Endothelial cell of umbilical vein (primary cell): ENCODE measurements at regions of chr18 and their contacts with region 1.

Region 1: GRCh38 chr18:1002653-1003178 is 98.0 kb downstream of the ADCYAP1 start:
- DNase-seq: peak; percentile 92
- H3K4me3 ChIP-seq: no peak overlapping the region
- H3K27ac ChIP-seq: peak overlapping the region; percentile 80
- H3K4me1 ChIP-seq: peaks cover 16% of the 10 kb centered on the region
- H3K27me3 ChIP-seq: no peaks in the 10 kb centered on the region
- CTCF ChIP-seq: no peak
- POLR2A ChIP-seq: no peak

Region 2: GRCh38 chr18:987325-988186 is 15.2 kb before region 1 on chr18:
- CTCF ChIA-PET with region 1: interaction called, 7 read pairs
- POLR2A ChIA-PET with region 1: no interaction called
- dilution Hi-C with region 1: no loop called
- intact Hi-C with region 1: loop called (anchors 1 kb)
- DNase-seq: peak; percentile 90
- H3K4me3 ChIP-seq: no peak overlapping the region
- H3K27ac ChIP-seq: peak overlapping the region; percentile 65
- H3K4me1 ChIP-seq: peaks cover 23% of the 10 kb centered on the region
- H3K27me3 ChIP-seq: no peaks in the 10 kb centered on the region
- CTCF ChIP-seq: no peak
- POLR2A ChIP-seq: peak; percentile 34

Region 3: DNA sequence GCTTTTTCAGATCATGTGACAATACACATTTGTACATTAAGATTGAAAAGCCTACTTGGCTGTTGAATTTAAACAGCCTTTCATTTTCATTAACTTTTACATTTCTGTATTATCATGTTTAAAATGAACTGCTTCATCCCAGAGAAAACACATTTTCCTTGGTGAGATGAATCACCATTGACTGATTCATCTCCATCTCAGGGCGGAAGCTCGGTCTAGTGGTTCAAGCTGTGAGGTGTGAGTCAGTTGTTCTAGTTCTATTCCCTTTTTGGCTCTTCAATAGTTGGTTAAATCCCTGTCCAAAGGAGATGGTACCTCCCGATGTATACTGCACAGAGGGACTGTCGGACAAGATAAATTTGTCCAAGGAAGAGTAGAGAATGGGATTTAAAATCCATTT is 91.7 kb after region 1 on chr18:
- CTCF ChIA-PET with region 1: no interaction called
- POLR2A ChIA-PET with region 1: no interaction called
- dilution Hi-C with region 1: no loop called
- intact Hi-C with region 1: no loop called
- DNase-seq: no peak
- H3K4me3 ChIP-seq: no peak overlapping the region
- H3K27ac ChIP-seq: no peak overlapping the region
- H3K4me1 ChIP-seq: no peaks in the 10 kb centered on the region
- H3K27me3 ChIP-seq: no peaks in the 10 kb centered on the region
- CTCF ChIP-seq: no peak
- POLR2A ChIP-seq: no peak